ENCODE measurements at regions of chr11 and their contacts with region 1.

Region 1: GRCh38 chr11:134231958-134232659 is 7.6 kb downstream of the VPS26B start:
- DNase-seq: no peak
- ATAC-seq: no peak
- H3K4me3 Mint-ChIP-seq: no peak overlapping the region
- H3K27ac Mint-ChIP-seq: peak overlapping the region; percentile 8
- H3K4me1 Mint-ChIP-seq: peaks cover 60% of the 10 kb centered on the region
- H3K27me3 Mint-ChIP-seq: no peaks in the 10 kb centered on the region

Region 2: GRCh38 chr11:134244655-134245054 is 12.5 kb after region 1 on chr11:
- CTCF ChIA-PET with region 1: interaction called, 18 read pairs
- POLR2A ChIA-PET with region 1: no interaction called
- DNase-seq: no peak
- ATAC-seq: peak; percentile 77
- H3K4me3 Mint-ChIP-seq: no peak overlapping the region
- H3K27ac Mint-ChIP-seq: no peak overlapping the region
- H3K4me1 Mint-ChIP-seq: peaks cover 8% of the 10 kb centered on the region
- H3K27me3 Mint-ChIP-seq: no peaks in the 10 kb centered on the region

Measured in activated CD8-positive, alpha-beta T cell treated with anti-CD3 and anti-CD28 coated beads, Interleukin-2, amount 10 ng/mL, durations not matched to agents 7 days and 5 days (primary cell).